ENCODE measurements at regions of chr19 and their contacts with region 1.

Region 1: GRCh38 chr19:13731147-13731964 is 33.0 kb upstream of the MRI1 start:
- DNase-seq: peak; percentile 93
- H3K4me3 Mint-ChIP-seq: peak overlapping the region; percentile 85
- H3K27ac Mint-ChIP-seq: peak overlapping the region; percentile 98
- H3K4me1 Mint-ChIP-seq: peaks cover 15% of the 10 kb centered on the region
- H3K27me3 Mint-ChIP-seq: no peaks in the 10 kb centered on the region

Region 2: DNA sequence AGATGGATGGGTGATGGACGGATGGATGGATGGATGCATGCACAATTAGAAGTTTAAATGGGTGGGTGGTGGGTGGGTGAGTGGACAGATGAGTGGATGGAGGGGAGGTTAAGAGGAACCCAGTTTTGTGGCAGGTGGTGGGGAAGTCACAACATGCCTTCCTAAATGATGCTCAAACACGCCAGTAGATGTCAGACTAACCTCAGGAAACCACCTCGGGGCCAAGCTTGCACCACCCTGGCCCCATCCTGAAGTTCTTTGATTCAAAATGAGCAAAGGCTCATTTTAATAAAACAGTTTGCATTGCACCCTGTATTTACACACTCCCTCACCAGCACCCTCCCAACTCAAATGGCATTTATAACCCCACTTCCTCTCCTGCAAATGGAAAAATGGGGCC is 133.7 kb before region 1 on chr19:
- intact Hi-C with region 1: loop called (anchors 5 kb)
- DNase-seq: peak; percentile 28
- H3K4me3 Mint-ChIP-seq: no peak overlapping the region
- H3K27ac Mint-ChIP-seq: no peak overlapping the region
- H3K4me1 Mint-ChIP-seq: peaks cover 2% of the 10 kb centered on the region
- H3K27me3 Mint-ChIP-seq: no peaks in the 10 kb centered on the region

Region 3: GRCh38 chr19:13748169-13748828 is 16.9 kb after region 1 on chr19:
- intact Hi-C with region 1: loop called (anchors 1 kb)
- DNase-seq: no peak
- H3K4me3 Mint-ChIP-seq: peak overlapping the region; percentile 87
- H3K27ac Mint-ChIP-seq: peak overlapping the region; percentile 85
- H3K4me1 Mint-ChIP-seq: peaks cover 11% of the 10 kb centered on the region
- H3K27me3 Mint-ChIP-seq: no peaks in the 10 kb centered on the region

Region 4: DNA sequence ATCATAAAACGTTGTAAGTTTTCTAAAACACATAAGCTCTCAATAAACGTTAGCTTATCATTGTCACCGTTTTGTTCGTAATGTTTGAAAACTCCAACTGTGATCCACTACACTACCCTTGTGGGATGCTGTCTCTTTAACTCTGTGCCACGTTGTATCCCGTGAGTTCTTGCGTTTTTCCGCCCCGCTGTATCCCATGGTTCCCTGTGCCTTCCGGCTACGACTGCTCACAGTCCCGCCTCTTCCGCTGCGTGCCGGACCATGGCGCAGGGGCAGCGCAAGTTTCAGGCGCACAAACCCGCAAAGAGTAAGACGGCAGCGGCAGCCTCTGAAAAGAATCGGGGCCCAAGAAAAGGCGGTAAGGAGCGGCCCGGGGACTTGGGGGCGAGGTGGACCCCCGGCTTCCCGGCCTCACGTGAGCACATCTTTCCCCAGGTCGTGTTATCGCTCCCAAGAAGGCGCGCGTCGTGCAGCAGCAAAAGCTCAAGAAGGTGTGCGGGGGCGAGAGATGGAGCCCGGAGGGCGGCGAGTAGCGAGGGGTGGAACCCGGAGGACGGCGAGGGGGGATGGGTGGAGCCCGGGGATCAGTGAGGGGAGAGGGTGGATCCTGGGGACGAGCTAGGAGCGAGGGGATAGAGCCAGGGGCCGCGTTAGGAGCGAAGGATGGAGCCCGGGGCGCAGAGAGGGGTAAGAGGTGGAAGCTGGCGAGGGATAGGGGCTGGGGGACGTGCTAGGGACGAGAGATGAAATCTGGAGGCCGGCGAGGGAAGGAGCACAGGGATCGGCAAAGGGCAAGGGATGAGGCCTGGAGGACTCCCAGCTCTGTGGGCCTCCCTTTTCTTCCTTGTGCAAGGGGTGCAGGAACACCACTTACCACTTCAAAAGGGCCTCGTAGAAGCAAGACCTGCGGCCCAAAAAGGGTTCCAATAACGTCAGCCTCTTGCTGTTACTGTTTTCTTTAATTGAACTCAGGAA is 43.1 kb after region 1 on chr19 and contains the start of gene C19orf53:
- intact Hi-C with region 1: no loop called
- DNase-seq: peak; percentile 87
- H3K4me3 Mint-ChIP-seq: peak within 1 kb of the TSS; percentile 99
- H3K27ac Mint-ChIP-seq: peak within 1 kb of the TSS; percentile 97
- H3K4me1 Mint-ChIP-seq: peaks cover 14% of the 10 kb centered on the region
- H3K27me3 Mint-ChIP-seq: no peaks in the 10 kb centered on the region
- total RNA-seq, gene C19orf53: 131 and 137 TPM in 2 replicates

Region 5: DNA sequence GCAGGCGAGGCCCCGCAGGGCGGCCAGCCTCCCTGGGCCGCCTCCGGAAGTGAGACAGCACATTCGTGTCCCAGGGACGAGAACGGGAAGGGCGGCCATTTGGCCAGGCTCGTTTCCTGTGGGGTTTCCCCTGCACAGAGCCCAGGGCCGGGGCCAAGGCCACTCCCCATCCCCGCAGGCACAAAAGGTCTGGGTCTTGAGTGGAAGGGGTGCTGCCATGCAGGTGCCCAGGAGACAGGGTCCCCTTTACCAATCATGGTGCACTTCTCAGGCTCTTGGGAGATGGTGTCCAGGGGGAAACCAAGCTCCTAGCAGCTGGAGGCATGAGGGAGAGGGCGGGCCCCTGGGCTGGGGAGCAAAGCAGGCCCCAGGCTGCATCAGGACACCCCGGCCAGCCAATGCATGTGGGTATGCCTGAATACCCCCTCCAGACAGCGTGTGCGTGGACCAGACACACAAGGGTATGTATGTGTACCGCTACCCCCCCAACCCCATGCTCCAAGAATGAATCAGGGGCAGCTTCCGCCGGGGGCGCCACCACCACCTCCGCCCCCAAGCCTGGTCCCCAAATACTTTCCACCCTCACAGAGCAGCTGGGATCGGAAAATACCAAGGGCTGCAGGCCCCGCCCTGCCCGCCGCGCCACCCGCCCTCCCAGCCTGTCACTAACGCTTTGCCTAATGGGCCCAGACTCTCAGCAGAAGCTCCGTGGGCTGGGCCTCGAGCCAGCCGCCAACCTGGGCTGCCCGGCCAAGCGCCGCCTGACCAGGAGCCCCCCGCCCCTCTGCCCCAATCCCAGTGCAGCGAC is 108.0 kb after region 1 on chr19:
- intact Hi-C with region 1: loop called (anchors 5 kb)
- DNase-seq: peak; percentile 77
- H3K4me3 Mint-ChIP-seq: peak overlapping the region; percentile 92
- H3K27ac Mint-ChIP-seq: peak overlapping the region; percentile 90
- H3K4me1 Mint-ChIP-seq: peaks cover 29% of the 10 kb centered on the region
- H3K27me3 Mint-ChIP-seq: no peaks in the 10 kb centered on the region

Region 6: GRCh38 chr19:13952154-13953035 is 221.0 kb after region 1 on chr19 and contains the start of gene DCAF15:
- intact Hi-C with region 1: loop called (anchors 2 kb)
- DNase-seq: peak; percentile 99
- H3K4me3 Mint-ChIP-seq: peak within 1 kb of the TSS; percentile 97
- H3K27ac Mint-ChIP-seq: peak within 1 kb of the TSS; percentile 93
- H3K4me1 Mint-ChIP-seq: peaks cover 15% of the 10 kb centered on the region
- H3K27me3 Mint-ChIP-seq: peaks cover 2% of the 10 kb centered on the region
- total RNA-seq, gene DCAF15: 60.6 and 64.0 TPM in 2 replicates

Measured in activated T-helper 2 cell treated with anti-CD3 and anti-CD28 coated beads, Interferon-gamma antibody, Interleukin-2, Interleukin-4, amounts not matched to agents 10 μg/mL and 5 μg/mL and 100 μg/mL, durations not matched to agents 14 hours and 24 hours and 36 hours (primary cell).